Endothelial cell of umbilical vein (primary cell): ENCODE measurements at regions of chr9 and their contacts with region 1.

Region 1: DNA sequence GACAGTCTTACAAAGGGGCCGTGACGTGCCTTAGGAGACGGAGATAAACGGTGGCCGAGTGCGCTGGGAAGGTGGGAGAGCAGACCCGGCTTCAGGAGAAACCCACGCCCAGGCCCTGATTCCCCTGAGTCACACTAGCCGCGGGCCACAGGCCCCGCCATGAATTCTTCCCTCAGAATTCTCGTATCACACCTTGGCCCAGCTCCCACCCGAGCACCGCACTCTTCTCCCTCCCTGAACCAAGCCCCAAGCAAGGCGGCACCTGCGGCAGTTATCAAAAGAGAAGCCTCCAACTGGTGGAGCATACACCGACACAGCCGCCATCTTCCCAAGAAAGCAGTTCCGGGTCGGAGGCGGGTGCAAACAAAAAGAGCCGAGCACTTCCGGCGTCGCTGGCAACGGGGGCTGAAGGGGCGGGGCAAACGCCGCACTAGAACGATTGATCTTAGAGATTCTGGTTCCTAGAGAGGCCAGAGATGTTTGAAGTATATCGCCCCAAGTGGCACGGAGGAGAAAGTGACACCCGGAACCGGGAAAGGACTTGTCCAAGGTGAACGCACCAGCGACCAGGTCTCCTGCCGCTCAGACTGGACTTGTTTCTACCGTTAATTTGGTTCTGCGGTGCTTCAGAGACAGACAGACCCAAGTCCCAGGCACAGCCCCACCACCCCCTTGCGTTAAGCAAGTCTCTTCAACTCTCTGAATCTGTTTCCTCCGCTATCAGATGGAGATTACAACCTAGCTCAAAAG is at the start of gene PSMB7:
- DNase-seq: peak; percentile 97
- H3K4me3 ChIP-seq: peak within 1 kb of the TSS; percentile 63 to 97 (median 74)
- H3K27ac ChIP-seq: peak within 1 kb of the TSS; percentile 88
- H3K4me1 ChIP-seq: peaks cover 36% of the 10 kb centered on the region
- H3K27me3 ChIP-seq: no peaks in the 10 kb centered on the region
- CTCF ChIP-seq: peak; percentile 86 to 87
- POLR2A ChIP-seq: peak; percentile 26
- total RNA-seq, gene PSMB7: 227 and 241 TPM in 2 replicates

Region 2: GRCh38 chr9:124392871-124393460 is 22.3 kb before region 1 on chr9:
- CTCF ChIA-PET with region 1: interaction called, 62 read pairs
- POLR2A ChIA-PET with region 1: no interaction called
- dilution Hi-C with region 1: no loop called
- intact Hi-C with region 1: no loop called
- DNase-seq: peak; percentile 75
- H3K4me3 ChIP-seq: no peak overlapping the region
- H3K27ac ChIP-seq: peak overlapping the region; percentile 54
- H3K4me1 ChIP-seq: peaks cover 34% of the 10 kb centered on the region
- H3K27me3 ChIP-seq: no peaks in the 10 kb centered on the region
- CTCF ChIP-seq: peak; percentile 29 to 55
- POLR2A ChIP-seq: no peak

Region 3: DNA sequence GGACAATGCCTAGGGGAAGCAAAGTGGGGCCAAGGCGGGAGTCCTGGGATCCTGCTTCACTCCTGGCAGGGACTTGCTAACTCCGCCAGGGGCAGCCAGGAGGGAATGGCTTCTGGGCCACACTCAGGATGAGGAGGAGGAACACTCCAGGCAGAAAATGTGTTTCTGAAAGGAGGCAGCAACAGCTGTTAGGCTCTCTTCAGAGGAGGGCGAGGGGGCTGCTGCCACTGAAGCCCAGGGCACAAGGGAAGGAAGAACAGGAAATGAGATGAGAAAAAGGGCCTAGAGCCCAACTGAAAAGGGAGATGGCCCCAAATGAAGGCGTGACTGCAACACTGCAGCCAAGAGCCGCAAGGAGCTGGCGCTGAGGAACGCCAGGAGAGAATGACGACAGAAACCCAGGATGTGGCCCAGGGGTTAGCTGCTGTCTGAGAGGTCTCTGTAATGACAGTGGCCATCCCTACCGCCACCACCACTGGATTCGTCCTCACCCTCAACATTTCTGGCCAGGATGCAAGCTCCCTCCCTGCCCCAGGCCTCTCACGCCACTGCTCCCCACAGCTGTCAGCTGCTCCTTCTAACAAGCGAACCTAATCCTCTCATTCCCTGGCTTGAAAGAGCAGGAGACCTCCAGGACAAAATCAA is 15.8 kb before region 1 on chr9:
- CTCF ChIA-PET with region 1: interaction called, 62 read pairs
- POLR2A ChIA-PET with region 1: no interaction called
- dilution Hi-C with region 1: no loop called
- intact Hi-C with region 1: no loop called
- DNase-seq: no peak
- H3K4me3 ChIP-seq: no peak overlapping the region
- H3K27ac ChIP-seq: no peak overlapping the region
- H3K4me1 ChIP-seq: peaks cover 3% of the 10 kb centered on the region
- H3K27me3 ChIP-seq: no peaks in the 10 kb centered on the region
- CTCF ChIP-seq: no peak
- POLR2A ChIP-seq: no peak

Region 4: DNA sequence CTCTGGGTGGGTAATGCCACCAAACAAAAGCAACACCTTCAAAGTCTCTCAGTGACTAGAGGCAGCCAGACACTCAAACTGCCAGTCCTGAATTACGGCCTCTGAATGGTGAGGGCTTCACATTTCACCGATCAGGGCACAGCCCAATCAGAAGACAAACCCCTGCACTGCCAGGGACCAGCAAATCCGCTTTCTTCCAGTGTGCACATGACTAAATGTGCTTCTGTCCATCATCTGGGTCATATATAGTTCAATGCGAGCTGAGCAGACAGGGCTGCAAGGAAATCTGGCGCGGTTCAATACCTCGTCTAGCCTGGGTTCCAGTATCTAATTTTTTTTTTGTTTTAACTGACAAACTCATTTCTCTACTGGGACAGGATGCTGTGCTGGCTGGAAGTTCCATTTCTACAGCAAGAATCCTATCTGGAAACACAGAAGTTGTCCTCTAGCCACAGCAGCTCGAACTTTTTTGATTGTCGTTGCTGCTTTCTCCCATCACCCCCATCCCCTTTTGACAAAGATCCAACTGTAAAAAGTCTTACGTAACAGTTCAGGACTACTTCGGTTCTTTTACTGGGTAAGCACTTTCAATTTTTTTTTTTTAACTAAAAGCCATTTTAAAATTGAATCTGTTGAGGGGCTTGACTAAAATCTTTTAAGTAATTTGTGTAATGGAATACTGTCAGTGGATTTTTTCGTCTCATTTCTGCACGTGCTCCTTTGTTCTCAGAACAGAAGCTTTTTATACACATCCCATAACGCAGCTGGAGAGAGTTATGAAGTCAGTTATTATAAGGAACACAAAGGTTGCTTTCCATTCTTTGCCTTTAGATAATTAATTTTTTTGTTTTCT is 243.1 kb after region 1 on chr9:
- CTCF ChIA-PET with region 1: no interaction called
- POLR2A ChIA-PET with region 1: no interaction called
- dilution Hi-C with region 1: no loop called
- intact Hi-C with region 1: loop called (anchors 5 kb)
- DNase-seq: peak; percentile 95
- H3K4me3 ChIP-seq: peak overlapping the region; percentile 53 to 100 (median 99)
- H3K27ac ChIP-seq: peak overlapping the region; percentile 98
- H3K4me1 ChIP-seq: peaks cover 33% of the 10 kb centered on the region
- H3K27me3 ChIP-seq: no peaks in the 10 kb centered on the region
- CTCF ChIP-seq: no peak
- POLR2A ChIP-seq: peak; percentile 99